Sciatic nerve (tissue), 2 donors: ENCODE measurements at regions of chr6 and their contacts with region 1.

Region 1: GRCh38 chr6:111573892-111574797 is 31.5 kb downstream of the TRAF3IP2 start:
- DNase-seq: no peak
- ATAC-seq: peak; percentile 66

Region 2: GRCh38 chr6:111483736-111484632 is 90.2 kb before region 1 on chr6:
- intact Hi-C with region 1: loop called (anchors 10 kb)
- DNase-seq: peak; percentile 95
- ATAC-seq: peak; percentile 94

Region 3: GRCh38 chr6:111536910-111537527 is 37.1 kb before region 1 on chr6:
- intact Hi-C with region 1: no loop called
- DNase-seq: no peak
- ATAC-seq: peak; percentile 72